Endothelial cell of umbilical vein (primary cell): ENCODE measurements at regions of chr11 and their contacts with region 1.

Region 1: GRCh38 chr11:4134844-4135243 is 40.2 kb downstream of the RRM1 start:
- DNase-seq: peak; percentile 79
- H3K4me3 ChIP-seq: no peak overlapping the region
- H3K27ac ChIP-seq: peak overlapping the region; percentile 76
- H3K4me1 ChIP-seq: peaks cover 22% of the 10 kb centered on the region
- H3K27me3 ChIP-seq: no peaks in the 10 kb centered on the region
- CTCF ChIP-seq: no peak
- POLR2A ChIP-seq: no peak

Region 2: DNA sequence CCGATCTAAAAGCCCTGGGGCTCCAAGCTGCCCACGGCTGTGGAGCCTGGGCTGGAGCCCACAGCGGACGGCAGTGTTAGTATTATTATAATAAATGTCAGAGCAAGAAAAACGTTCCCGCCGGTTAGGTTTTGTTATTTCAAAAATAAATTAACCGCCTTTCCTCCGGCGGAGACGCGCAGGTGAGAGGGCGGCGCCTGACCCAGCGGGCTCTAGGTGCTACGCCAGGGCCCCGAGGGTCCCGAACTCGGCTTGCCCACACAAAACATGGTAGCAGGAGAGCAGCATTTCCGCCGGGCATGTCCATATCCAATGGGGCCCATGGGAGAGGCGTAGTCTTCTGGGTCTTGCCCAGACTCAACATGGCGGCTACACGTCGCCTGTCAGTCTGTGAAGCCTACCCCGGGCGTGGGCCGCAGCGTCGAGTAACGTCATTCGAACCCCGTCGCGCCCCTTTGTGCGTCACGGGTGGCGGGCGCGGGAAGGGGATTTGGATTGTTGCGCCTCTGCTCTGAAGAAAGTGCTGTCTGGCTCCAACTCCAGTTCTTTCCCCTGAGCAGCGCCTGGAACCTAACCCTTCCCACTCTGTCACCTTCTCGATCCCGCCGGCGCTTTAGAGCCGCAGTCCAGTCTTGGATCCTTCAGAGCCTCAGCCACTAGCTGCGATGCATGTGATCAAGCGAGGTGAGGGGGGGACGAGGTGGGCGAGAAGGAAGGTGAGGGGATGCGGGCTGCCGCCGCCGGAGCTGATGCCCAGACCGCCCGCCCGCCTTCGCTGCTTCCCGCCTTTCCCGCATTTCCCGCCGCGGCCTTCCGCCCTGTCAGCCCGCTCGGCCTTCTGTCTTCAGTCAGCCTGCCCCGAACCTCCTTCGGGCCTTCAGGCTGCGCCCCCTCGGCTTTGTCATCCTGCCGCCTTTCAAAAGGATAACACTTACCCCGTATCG is 40.2 kb before region 1 on chr11 and contains the start of gene RRM1:
- CTCF ChIA-PET with region 1: no interaction called
- POLR2A ChIA-PET with region 1: no interaction called
- dilution Hi-C with region 1: no loop called
- intact Hi-C with region 1: loop called (anchors 2 kb)
- DNase-seq: peak; percentile 98
- H3K4me3 ChIP-seq: peak within 1 kb of the TSS; percentile 42 to 91 (median 87)
- H3K27ac ChIP-seq: peak within 1 kb of the TSS; percentile 66
- H3K4me1 ChIP-seq: peaks cover 11% of the 10 kb centered on the region
- H3K27me3 ChIP-seq: no peaks in the 10 kb centered on the region
- CTCF ChIP-seq: no peak
- POLR2A ChIP-seq: peak; percentile 90
- total RNA-seq, gene RRM1: 109 and 112 TPM in 2 replicates

Region 3: GRCh38 chr11:4146070-4146771 is 11.4 kb after region 1 on chr11:
- CTCF ChIA-PET with region 1: no interaction called
- POLR2A ChIA-PET with region 1: no interaction called
- dilution Hi-C with region 1: no loop called
- intact Hi-C with region 1: no loop called
- DNase-seq: no peak
- H3K4me3 ChIP-seq: no peak overlapping the region
- H3K27ac ChIP-seq: no peak overlapping the region
- H3K4me1 ChIP-seq: no peaks in the 10 kb centered on the region
- H3K27me3 ChIP-seq: peaks cover 0 to 1% of the 10 kb centered on the region in 2 experiments
- CTCF ChIP-seq: no peak
- POLR2A ChIP-seq: no peak